Activated CD8-positive, alpha-beta T cell treated with anti-CD3 and anti-CD28 coated beads, Interleukin-2, amount 10 ng/mL, durations not matched to agents 7 days and 5 days (primary cell): ENCODE measurements at regions of chr7 and their contacts with region 1.

Region 1: DNA sequence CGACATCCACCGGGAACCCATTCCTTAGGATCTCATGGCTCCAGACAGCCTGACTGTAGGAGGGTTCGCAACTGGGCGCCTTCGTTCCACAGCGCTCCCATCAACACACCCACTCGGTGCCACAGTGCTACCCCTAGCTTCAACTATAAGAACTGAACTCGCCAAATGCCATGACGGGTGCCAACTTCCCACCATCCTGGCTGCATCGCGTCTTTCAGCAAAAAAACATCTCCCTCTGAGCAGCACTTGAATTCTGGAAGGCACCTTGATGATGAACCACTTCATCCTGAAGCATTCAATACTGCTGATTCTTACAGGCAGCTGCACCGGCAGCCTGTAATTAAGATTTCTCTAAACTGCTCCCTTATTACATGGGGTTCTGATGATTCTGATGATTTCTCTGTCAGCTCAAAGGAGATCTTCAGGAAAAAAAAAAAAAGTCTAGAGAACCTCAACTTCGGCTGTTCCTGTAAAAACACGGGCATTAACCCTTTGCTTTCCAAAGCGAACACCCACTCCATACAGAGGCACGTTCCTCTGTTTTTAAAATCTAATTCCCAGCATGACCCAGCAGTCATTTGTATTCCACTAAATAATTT is 1.3 kb downstream of the CYTH3 start:
- DNase-seq: peak; percentile 46
- ATAC-seq: no peak
- H3K4me3 Mint-ChIP-seq: peak overlapping the region; percentile 73
- H3K27ac Mint-ChIP-seq: no peak overlapping the region
- H3K4me1 Mint-ChIP-seq: peaks cover 15% of the 10 kb centered on the region
- H3K27me3 Mint-ChIP-seq: peaks cover 47% of the 10 kb centered on the region

Region 2: DNA sequence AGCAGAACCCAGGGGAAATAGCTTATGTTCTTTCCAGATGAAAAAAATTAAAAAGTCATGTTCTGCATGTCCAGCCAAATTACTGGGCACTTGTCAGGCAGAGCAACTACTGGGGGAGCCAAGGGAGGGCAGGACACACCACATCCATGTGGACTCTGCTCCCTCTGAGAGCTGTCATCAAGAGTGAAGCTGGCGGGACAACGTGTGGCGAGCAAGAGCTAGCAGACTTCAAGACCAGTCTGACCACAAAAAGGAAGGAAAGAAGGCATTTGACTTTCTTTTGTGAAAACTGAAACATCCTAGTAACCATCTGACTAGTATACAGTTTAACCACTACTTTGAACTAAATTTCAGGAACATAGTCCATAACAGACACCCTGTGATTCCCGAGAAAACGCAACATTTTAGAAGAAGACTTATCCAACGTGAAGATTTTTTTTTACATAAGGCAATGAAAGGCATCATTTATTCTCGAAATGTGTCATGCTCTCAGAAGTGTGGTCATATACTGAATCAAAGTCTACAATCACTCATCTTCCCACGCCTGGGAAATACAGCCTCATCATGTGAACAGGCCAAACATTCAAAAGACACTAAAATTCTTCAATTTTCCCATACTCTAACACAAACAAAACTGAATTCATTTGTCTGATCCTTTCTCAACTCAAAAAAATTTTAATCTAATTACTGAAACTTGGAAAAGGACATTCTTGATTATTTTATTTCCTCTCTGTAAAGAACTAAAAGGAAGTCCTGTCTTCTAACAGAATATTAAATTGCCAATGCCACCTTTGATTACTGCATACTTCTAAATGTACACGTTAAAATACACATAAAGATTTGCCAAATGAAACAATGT is 14.3 kb before region 1 on chr7:
- CTCF ChIA-PET with region 1: interaction called, 28 read pairs
- POLR2A ChIA-PET with region 1: no interaction called
- DNase-seq: no peak
- ATAC-seq: peak; percentile 67
- H3K4me3 Mint-ChIP-seq: no peak overlapping the region
- H3K27ac Mint-ChIP-seq: no peak overlapping the region
- H3K4me1 Mint-ChIP-seq: peaks cover 35% of the 10 kb centered on the region
- H3K27me3 Mint-ChIP-seq: peaks cover 20% of the 10 kb centered on the region